ENCODE measurements at regions of chr7 and their contacts with region 1.

Region 1: GRCh38 chr7:150448789-150449147 is 1.7 kb upstream of the GIMAP8 start:
- DNase-seq: peak; percentile 62 to 97 (median 76)

Region 2: DNA sequence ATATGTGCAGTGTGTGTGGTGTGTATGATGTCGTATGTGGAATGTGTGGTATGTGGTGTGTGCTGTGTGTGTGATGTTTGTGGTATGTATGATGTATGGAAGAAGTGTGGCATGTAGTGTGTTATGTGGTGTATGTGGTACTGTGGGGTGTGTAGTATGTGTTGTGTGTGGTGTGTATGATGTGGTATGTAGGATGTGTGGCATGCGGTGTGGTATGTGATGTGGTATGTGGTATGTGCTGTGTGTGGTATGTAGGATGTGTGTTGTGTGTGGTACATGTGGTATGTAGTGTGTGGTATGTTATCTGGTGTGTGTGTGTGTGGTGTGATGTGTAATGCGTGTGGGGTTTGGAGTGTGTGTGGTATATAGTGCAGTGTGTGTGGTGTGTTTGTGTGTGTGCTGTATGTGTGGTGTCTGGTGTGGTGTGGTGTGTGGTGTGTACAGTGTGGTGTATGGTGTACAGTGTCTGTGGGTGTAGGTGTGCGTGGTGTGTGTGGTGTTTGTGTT is 445.4 kb before region 1 on chr7:
- intact Hi-C with region 1: no loop called
- DNase-seq: no peak

Region 3: GRCh38 chr7:150406567-150407421 is 42.0 kb before region 1 on chr7:
- intact Hi-C with region 1: no loop called
- DNase-seq: peak in 1 of 10 donors; percentile 47

Region 4: GRCh38 chr7:150567169-150567568 is 118.4 kb after region 1 on chr7 and contains the start of gene GIMAP4:
- intact Hi-C with region 1: loop called (anchors 10 kb)
- DNase-seq: no peak

Region 5: DNA sequence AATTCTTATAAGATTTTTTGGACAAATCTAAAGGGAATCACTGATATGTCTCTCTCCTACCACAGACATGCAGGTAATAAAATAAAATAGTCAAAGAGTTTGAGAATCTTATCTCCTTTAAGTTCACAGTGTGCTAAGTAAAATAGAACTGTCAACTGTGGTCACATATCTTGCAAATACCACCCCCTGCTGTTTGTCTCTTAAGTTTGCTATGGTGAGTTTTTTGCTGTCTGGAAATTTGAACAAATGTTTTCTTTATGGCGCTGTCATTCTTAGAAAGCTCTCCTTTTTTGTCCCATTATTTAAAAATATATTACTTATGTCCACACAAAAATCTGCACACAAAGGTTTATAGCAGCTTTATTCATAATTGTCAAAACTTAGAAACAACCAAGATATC is 308.1 kb after region 1 on chr7:
- intact Hi-C with region 1: loop called (anchors 1 kb)
- DNase-seq: no peak

Measured in posterior cingulate gyrus (tissue), 11 donors.